Cardiac septum (tissue), 1 donor: ENCODE measurements at regions of chr2 and their contacts with region 1.

Region 1: DNA sequence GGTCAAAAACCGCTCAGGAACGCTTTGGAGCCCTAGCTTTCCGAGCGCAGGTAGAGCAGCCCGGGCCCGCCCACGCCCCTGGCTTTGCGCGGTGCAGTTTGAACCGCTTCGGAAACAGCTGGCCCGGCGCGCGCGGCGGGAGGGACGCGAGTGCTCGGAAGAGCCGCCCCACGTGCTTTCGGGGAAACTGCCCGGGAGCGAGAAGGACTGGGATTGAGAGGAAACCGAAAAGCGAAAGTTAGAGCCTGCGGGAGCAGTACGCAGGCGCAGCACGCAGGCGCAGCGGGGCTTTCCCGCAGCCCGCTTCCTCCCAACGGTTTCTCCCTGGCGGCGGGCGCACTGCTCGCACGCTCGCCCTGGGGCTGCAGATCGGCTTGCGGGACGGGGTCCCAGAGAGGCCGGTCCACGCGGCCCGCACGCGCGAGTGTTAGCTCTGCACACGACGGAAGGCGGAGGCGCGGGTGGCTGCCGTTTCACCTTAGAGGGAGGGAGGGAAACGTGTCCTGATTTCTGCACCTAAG is 6.3 kb upstream of the STAT1 start:
- DNase-seq: peak; percentile 96

Region 2: GRCh38 chr2:190835303-190835930 is 184.9 kb before region 1 on chr2:
- intact Hi-C with region 1: no loop called
- DNase-seq: no peak

Region 3: GRCh38 chr2:191677646-191678436 is 657.6 kb after region 1 on chr2 and contains the start of gene NABP1:
- intact Hi-C with region 1: loop called (anchors 5 kb)
- DNase-seq: peak; percentile 100
- total RNA-seq, gene NABP1: 6.6 TPM